AG04449 (cell line): ENCODE measurements at regions of chr10 and their contacts with region 1.

Region 1: GRCh38 chr10:125868372-125868975 is 12.6 kb downstream of the DHX32 start:
- DNase-seq: no peak
- H3K4me3 ChIP-seq: no peak overlapping the region
- CTCF ChIP-seq: peak; percentile 69

Region 2: GRCh38 chr10:125531465-125531864 is 337.0 kb before region 1 on chr10:
- CTCF ChIA-PET with region 1: no interaction called
- POLR2A ChIA-PET with region 1: no interaction called
- DNase-seq: no peak
- H3K4me3 ChIP-seq: no peak overlapping the region
- CTCF ChIP-seq: no peak

Region 3: DNA sequence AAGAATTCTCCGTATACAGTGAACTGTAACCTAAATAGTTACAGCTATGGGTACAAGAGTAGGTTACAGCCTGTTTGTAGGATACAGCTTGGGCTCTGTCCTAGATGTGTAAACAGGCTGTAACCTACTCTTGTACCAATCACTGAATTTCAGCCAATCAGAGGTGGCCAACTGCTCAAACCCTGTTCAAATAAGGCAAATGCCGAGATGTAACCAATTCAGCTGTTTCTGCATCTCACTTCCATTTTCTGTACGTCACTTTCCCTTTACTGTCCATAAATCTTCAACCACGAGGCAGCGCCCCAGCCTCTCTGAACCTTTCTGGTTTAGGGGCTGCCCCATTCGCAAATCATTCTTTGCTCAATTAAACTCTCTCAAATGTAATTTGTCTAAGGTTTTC is 84.5 kb before region 1 on chr10:
- CTCF ChIA-PET with region 1: no interaction called
- POLR2A ChIA-PET with region 1: no interaction called
- DNase-seq: no peak
- H3K4me3 ChIP-seq: no peak overlapping the region
- CTCF ChIP-seq: no peak

Region 4: GRCh38 chr10:125878957-125879835 is 10.7 kb after region 1 on chr10:
- CTCF ChIA-PET with region 1: interaction called, 62 read pairs
- POLR2A ChIA-PET with region 1: no interaction called
- DNase-seq: peak; percentile 65
- H3K4me3 ChIP-seq: no peak overlapping the region
- CTCF ChIP-seq: no peak